Activated T-helper 1 cell treated with anti-CD3 and anti-CD28 coated beads, Interleukin-12 subunit alpha, Interleukin-12 subunit beta, Interleukin-2, Interleukin-4 antibody, amounts not matched to agents 30 ng/mL and 10 ng/mL and 1 ng/mL, durations not matched to agents 14 hours and 24 hours and 36 hours (primary cell): ENCODE measurements at regions of chr17 and their contacts with region 1.

Region 1: DNA sequence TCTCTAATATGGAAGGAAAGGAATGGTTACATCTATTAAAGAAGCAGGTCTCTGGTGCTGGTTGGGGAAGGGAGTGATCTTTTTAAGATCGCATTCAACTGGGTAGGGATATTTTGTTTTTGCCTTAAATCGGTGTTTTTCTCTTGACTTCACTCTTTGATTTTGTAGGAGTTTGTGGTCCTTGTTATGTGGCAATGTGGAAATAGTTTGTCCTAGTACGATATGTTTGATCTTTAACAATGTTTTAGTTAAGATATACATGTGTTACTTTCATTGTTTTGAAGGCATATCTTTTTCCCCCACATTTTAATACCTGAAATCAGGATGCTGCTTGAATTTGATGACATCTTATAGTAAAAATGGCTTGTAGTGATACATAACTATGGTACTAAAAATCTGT is 8.7 kb downstream of the GGNBP2 start:
- DNase-seq: no peak
- H3K4me3 Mint-ChIP-seq: peak overlapping the region; percentile 6
- H3K27ac Mint-ChIP-seq: no peak overlapping the region
- H3K4me1 Mint-ChIP-seq: peaks cover 41% of the 10 kb centered on the region
- H3K27me3 Mint-ChIP-seq: no peaks in the 10 kb centered on the region

Region 2: GRCh38 chr17:36566081-36566480 is 12.6 kb after region 1 on chr17:
- intact Hi-C with region 1: loop called (anchors 2 kb)
- DNase-seq: no peak
- H3K4me3 Mint-ChIP-seq: no peak overlapping the region
- H3K27ac Mint-ChIP-seq: no peak overlapping the region
- H3K4me1 Mint-ChIP-seq: peaks cover 6% of the 10 kb centered on the region
- H3K27me3 Mint-ChIP-seq: no peaks in the 10 kb centered on the region

Region 3: GRCh38 chr17:36591434-36592315 is 38.2 kb after region 1 on chr17 and contains the start of gene DHRS11:
- intact Hi-C with region 1: no loop called
- DNase-seq: peak; percentile 74
- H3K4me3 Mint-ChIP-seq: peak within 1 kb of the TSS; percentile 85
- H3K27ac Mint-ChIP-seq: peak within 1 kb of the TSS; percentile 65
- H3K4me1 Mint-ChIP-seq: peaks cover 28% of the 10 kb centered on the region
- H3K27me3 Mint-ChIP-seq: no peaks in the 10 kb centered on the region
- total RNA-seq, gene DHRS11: 15.9 and 16.4 TPM in 2 replicates

Region 4: GRCh38 chr17:36674278-36674650 is 120.8 kb after region 1 on chr17:
- intact Hi-C with region 1: no loop called
- DNase-seq: peak; percentile 63
- H3K4me3 Mint-ChIP-seq: peak overlapping the region; percentile 34
- H3K27ac Mint-ChIP-seq: peak overlapping the region; percentile 96
- H3K4me1 Mint-ChIP-seq: peaks cover 46% of the 10 kb centered on the region
- H3K27me3 Mint-ChIP-seq: no peaks in the 10 kb centered on the region